ENCODE measurements at regions of chr10 and their contacts with region 1.

Region 1: GRCh38 chr10:68032113-68032512 is 43.0 kb downstream of the HERC4 start:
- DNase-seq: no peak
- H3K4me3 ChIP-seq: no peak overlapping the region
- H3K27ac ChIP-seq: no peak overlapping the region
- H3K4me1 ChIP-seq: no peaks in the 10 kb centered on the region
- H3K27me3 ChIP-seq: no peaks in the 10 kb centered on the region
- CTCF ChIP-seq: no peak

Region 2: GRCh38 chr10:67669978-67670377 is 362.1 kb before region 1 on chr10:
- CTCF ChIA-PET with region 1: no interaction called
- POLR2A ChIA-PET with region 1: no interaction called
- intact Hi-C with region 1: no loop called
- DNase-seq: no peak
- H3K4me3 ChIP-seq: no peak overlapping the region
- H3K27ac ChIP-seq: no peak overlapping the region
- H3K4me1 ChIP-seq: no peaks in the 10 kb centered on the region
- H3K27me3 ChIP-seq: no peaks in the 10 kb centered on the region
- CTCF ChIP-seq: no peak

Region 3: GRCh38 chr10:68067029-68067428 is 34.9 kb after region 1 on chr10:
- CTCF ChIA-PET with region 1: no interaction called
- POLR2A ChIA-PET with region 1: no interaction called
- intact Hi-C with region 1: loop called (anchors 5 kb)
- DNase-seq: no peak
- H3K4me3 ChIP-seq: no peak overlapping the region
- H3K27ac ChIP-seq: 0 out of 2 replicates have a peak overlapping the region, but pooled peaks have one; percentile 10
- H3K4me1 ChIP-seq: peaks cover 30% of the 10 kb centered on the region
- H3K27me3 ChIP-seq: no peaks in the 10 kb centered on the region
- CTCF ChIP-seq: no peak

Measured in PC-9 (cell line).